PC-9 (cell line): ENCODE measurements at regions of chr22 and their contacts with region 1.

Region 1: GRCh38 chr22:38802671-38803121 is 8.8 kb upstream of the DNAL4 start:
- DNase-seq: peak; percentile 87 to 99
- H3K4me3 ChIP-seq: no peak overlapping the region; the same call in 1 of the 2 replicates
- H3K27ac ChIP-seq: peak overlapping the region; percentile 53
- H3K4me1 ChIP-seq: peaks cover 17% of the 10 kb centered on the region
- H3K27me3 ChIP-seq: no peaks in the 10 kb centered on the region
- CTCF ChIP-seq: no peak

Region 2: DNA sequence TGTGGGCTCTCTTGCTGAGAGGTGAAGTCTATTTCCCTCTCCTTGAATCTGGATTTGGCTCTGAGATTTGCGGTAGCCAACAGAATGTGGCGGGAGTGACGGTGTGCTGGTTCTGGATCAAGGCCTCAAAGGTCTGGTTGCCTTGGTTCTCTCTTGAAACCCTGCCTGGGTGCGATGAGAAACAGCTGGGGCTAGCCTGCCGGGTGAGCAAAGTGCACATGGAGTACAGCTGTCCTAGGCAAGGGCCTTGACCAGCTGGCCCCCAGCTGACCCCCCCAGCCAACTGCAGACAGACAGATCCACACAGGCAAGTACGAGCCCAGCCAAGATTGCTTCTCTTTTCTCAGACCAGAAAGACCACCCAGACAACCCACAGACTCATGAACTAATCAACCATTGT is 57.7 kb before region 1 on chr22:
- CTCF ChIA-PET with region 1: no interaction called
- POLR2A ChIA-PET with region 1: no interaction called
- intact Hi-C with region 1: no loop called
- DNase-seq: no peak
- H3K4me3 ChIP-seq: no peak overlapping the region
- H3K27ac ChIP-seq: no peak overlapping the region
- H3K4me1 ChIP-seq: no peaks in the 10 kb centered on the region
- H3K27me3 ChIP-seq: no peaks in the 10 kb centered on the region
- CTCF ChIP-seq: no peak

Region 3: DNA sequence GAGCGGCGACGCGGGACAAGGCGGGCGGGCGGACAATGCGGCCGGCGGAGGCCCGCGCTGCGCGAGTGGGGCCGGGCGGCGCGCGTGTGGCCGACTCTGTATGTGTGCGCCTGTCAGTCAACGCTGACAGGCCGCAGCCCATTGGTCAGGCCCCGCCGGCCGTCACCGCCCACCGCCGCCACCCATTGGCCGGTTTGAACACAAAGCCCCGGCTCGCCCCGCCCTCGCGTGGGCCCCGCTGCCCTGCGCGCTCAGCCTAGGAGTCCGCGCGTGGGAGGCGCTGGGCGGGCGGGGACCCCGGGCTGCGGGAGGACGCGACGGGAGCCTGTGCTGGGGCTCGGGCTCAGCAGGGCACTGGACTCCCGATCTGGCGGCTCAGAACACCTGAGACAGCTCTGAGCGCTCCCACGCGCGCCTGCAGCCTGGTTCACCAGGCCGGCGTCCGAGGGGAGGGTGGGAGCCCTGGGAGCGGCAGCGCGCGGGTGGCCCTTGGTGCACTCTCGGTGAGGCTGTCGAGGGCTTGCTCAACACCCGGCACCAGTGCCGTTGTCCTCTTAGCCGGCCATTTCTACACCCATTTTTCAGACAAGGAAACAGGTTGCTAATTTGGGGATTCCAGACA is 46.7 kb before region 1 on chr22 and contains the start of gene SUN2:
- CTCF ChIA-PET with region 1: interaction called, 13 read pairs
- POLR2A ChIA-PET with region 1: no interaction called
- intact Hi-C with region 1: loop called (anchors 2 kb)
- DNase-seq: peak; percentile 71 to 90
- H3K4me3 ChIP-seq: peak within 1 kb of the TSS; percentile 89
- H3K27ac ChIP-seq: peak within 1 kb of the TSS; percentile 87
- H3K4me1 ChIP-seq: peaks cover 55% of the 10 kb centered on the region
- H3K27me3 ChIP-seq: no peaks in the 10 kb centered on the region
- CTCF ChIP-seq: no peak
- total RNA-seq, gene SUN2: 169 and 220 TPM in 2 replicates

Region 4: GRCh38 chr22:38831166-38831945 is 28.7 kb after region 1 on chr22:
- CTCF ChIA-PET with region 1: no interaction called
- POLR2A ChIA-PET with region 1: no interaction called
- intact Hi-C with region 1: no loop called
- DNase-seq: peak; percentile 24 to 87
- H3K4me3 ChIP-seq: no peak overlapping the region
- H3K27ac ChIP-seq: no peak overlapping the region
- H3K4me1 ChIP-seq: peaks cover 37% of the 10 kb centered on the region
- H3K27me3 ChIP-seq: no peaks in the 10 kb centered on the region
- CTCF ChIP-seq: no peak

Region 5: GRCh38 chr22:38861170-38861876 is 58.6 kb after region 1 on chr22:
- CTCF ChIA-PET with region 1: no interaction called
- POLR2A ChIA-PET with region 1: interaction called, 11 read pairs
- intact Hi-C with region 1: no loop called
- DNase-seq: no peak
- H3K4me3 ChIP-seq: no peak overlapping the region
- H3K27ac ChIP-seq: no peak overlapping the region
- H3K4me1 ChIP-seq: no peaks in the 10 kb centered on the region
- H3K27me3 ChIP-seq: no peaks in the 10 kb centered on the region
- CTCF ChIP-seq: no peak

Region 6: GRCh38 chr22:39343259-39344048 is 540.8 kb after region 1 on chr22:
- CTCF ChIA-PET with region 1: no interaction called
- POLR2A ChIA-PET with region 1: no interaction called
- intact Hi-C with region 1: no loop called
- DNase-seq: peak; percentile 69 to 72
- H3K4me3 ChIP-seq: no peak overlapping the region
- H3K27ac ChIP-seq: no peak overlapping the region
- H3K4me1 ChIP-seq: peaks cover 16% of the 10 kb centered on the region
- H3K27me3 ChIP-seq: no peaks in the 10 kb centered on the region
- CTCF ChIP-seq: peak; percentile 83